Tibial artery (tissue), 4 donors: ENCODE measurements at regions of chr22 and their contacts with region 1.

Region 1: GRCh38 chr22:41479671-41480396 is 10.9 kb downstream of the ACO2 start:
- DNase-seq: peak; percentile 28 to 76
- H3K4me3 ChIP-seq: no peak overlapping the region
- H3K27ac ChIP-seq: peak overlapping the region; percentile 89
- H3K4me1 ChIP-seq: peaks cover 0 to 63% (median 49%) of the 10 kb centered on the region in 4 donors
- H3K27me3 ChIP-seq: no peaks in the 10 kb centered on the region
- CTCF ChIP-seq: peak in 1 of 2 experiments; percentile 10

Region 2: DNA sequence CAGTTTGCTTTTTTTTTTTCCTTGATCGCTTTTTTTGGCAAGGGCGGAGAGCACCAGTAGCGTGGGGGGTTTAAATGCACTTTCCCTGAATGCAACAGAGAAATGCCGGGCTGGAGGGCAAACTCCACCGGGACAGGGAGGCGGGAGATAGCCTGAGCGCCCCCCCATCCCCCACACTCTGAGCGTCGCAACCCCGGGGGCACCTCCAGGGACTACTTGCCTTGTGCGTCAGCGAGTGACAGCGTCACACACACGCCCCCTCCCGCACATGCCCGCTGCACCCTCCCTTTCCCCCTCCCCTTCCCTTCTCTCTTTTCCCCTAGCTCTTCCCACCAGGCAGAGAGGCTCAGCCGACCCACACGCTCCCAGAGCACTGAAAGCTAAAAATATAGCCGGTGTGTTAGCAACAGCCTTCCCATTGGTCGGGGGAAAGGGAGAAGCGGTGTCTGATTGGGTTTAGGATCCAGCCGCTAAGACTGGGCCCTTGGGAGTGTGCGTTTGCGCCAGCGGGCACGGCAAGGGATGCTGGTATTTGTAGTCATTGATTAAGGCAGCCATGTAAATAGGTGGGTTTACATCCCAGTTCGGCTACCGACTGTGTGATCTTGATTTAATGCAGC is 31.5 kb before region 1 on chr22:
- intact Hi-C with region 1: loop called (anchors 5 kb)
- DNase-seq: peak; percentile 97 to 99
- H3K4me3 ChIP-seq: peak overlapping the region; percentile 88 to 95
- H3K27ac ChIP-seq: peak overlapping the region; percentile 95 to 98
- H3K4me1 ChIP-seq: peaks cover 0 to 14% (median 6%) of the 10 kb centered on the region in 4 donors
- H3K27me3 ChIP-seq: no peaks in the 10 kb centered on the region
- CTCF ChIP-seq: peak in 1 of 2 experiments; percentile 10

Region 3: GRCh38 chr22:41517172-41518047 is 37.6 kb after region 1 on chr22:
- intact Hi-C with region 1: loop called (anchors 5 kb)
- DNase-seq: peak; percentile 72 to 89
- H3K4me3 ChIP-seq: no peak overlapping the region
- H3K27ac ChIP-seq: peak overlapping the region; percentile 68 to 78
- H3K4me1 ChIP-seq: peaks cover 0 to 24% (median 13%) of the 10 kb centered on the region in 4 donors
- H3K27me3 ChIP-seq: no peaks in the 10 kb centered on the region
- CTCF ChIP-seq: peak; percentile 89 to 94

Region 4: DNA sequence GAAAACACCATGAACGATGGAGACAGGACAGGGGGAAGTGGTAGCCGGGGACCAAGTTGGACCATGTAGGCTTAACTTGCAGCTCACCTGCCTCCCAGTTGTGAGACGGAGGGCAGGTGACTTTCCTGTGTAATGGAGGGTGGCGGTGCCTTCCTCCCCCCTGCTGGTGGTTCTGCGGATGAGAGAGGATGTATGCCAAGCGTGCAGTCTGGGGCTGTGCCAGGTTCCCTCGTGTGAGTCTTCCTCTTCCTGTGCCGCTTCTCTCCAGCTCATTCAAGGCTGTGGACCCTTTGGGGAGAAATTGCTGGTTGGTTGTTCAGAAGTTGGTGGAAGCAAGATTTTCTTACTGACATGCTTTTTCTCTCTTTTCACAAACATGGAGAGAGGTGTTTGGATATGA is 1967.1 kb after region 1 on chr22:
- intact Hi-C with region 1: loop called (anchors 10 kb)
- DNase-seq: no peak
- H3K4me3 ChIP-seq: no peak overlapping the region
- H3K27ac ChIP-seq: no peak overlapping the region
- H3K4me1 ChIP-seq: no peaks in the 10 kb centered on the region
- H3K27me3 ChIP-seq: peaks cover 0 to 47% of the 10 kb centered on the region in 2 donors
- CTCF ChIP-seq: no peak